CD8-positive, alpha-beta memory T cell (primary cell): ENCODE measurements at regions of chr12 and their contacts with region 1.

Region 1: DNA sequence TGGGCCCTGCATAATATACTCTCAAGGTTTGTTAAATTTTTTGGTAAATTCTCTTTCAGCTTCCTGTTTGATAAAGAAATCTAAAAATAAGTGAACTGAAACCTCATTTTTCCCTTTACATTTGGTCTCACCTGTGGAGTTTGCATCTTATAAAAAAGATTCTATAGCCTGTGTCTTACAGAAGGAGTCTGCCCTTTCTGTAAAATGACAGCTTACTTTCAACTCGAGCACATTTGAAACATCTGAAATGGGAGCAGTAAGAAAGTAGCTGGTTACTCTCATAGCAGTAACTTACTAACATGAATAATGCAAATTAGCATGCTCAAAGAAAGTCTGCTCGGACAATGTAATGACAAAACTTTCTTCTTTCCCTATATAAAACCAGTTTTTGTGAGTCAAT is 155.8 kb downstream of the NELL2 start:
- DNase-seq: no peak
- H3K4me3 ChIP-seq: no peak overlapping the region
- H3K4me3 Mint-ChIP-seq: no peak overlapping the region
- H3K27ac ChIP-seq: no peak overlapping the region
- H3K27ac Mint-ChIP-seq: peak overlapping the region in 1 of 8 donors; percentile 23
- H3K4me1 ChIP-seq: no peaks in the 10 kb centered on the region
- H3K4me1 Mint-ChIP-seq: peaks cover 27 to 72% (median 52%) of the 10 kb centered on the region in 3 donors
- H3K27me3 ChIP-seq: no peaks in the 10 kb centered on the region
- H3K27me3 Mint-ChIP-seq: peaks cover 0 to 3% of the 10 kb centered on the region in 2 donors

Region 2: GRCh38 chr12:44654646-44655639 is 65.3 kb before region 1 on chr12:
- CTCF ChIA-PET with region 1: no interaction called
- POLR2A ChIA-PET with region 1: no interaction called
- DNase-seq: no peak
- H3K4me3 ChIP-seq: no peak overlapping the region
- H3K4me3 Mint-ChIP-seq: no peak overlapping the region
- H3K27ac ChIP-seq: no peak overlapping the region
- H3K27ac Mint-ChIP-seq: peak overlapping the region in 1 of 8 donors; percentile 5
- H3K4me1 ChIP-seq: no peaks in the 10 kb centered on the region
- H3K4me1 Mint-ChIP-seq: peaks cover 6 to 20% (median 12%) of the 10 kb centered on the region in 3 donors
- H3K27me3 ChIP-seq: no peaks in the 10 kb centered on the region
- H3K27me3 Mint-ChIP-seq: peaks cover 0 to 2% of the 10 kb centered on the region in 2 donors

Region 3: GRCh38 chr12:44689587-44689986 is 30.7 kb before region 1 on chr12:
- CTCF ChIA-PET with region 1: no interaction called
- POLR2A ChIA-PET with region 1: no interaction called
- DNase-seq: no peak
- H3K4me3 ChIP-seq: no peak overlapping the region
- H3K4me3 Mint-ChIP-seq: no peak overlapping the region
- H3K27ac ChIP-seq: no peak overlapping the region
- H3K27ac Mint-ChIP-seq: peak overlapping the region in 1 of 8 donors; percentile 80
- H3K4me1 ChIP-seq: no peaks in the 10 kb centered on the region
- H3K4me1 Mint-ChIP-seq: peaks cover 3 to 9% (median 6%) of the 10 kb centered on the region in 3 donors
- H3K27me3 ChIP-seq: no peaks in the 10 kb centered on the region
- H3K27me3 Mint-ChIP-seq: no peaks in the 10 kb centered on the region

Region 4: DNA sequence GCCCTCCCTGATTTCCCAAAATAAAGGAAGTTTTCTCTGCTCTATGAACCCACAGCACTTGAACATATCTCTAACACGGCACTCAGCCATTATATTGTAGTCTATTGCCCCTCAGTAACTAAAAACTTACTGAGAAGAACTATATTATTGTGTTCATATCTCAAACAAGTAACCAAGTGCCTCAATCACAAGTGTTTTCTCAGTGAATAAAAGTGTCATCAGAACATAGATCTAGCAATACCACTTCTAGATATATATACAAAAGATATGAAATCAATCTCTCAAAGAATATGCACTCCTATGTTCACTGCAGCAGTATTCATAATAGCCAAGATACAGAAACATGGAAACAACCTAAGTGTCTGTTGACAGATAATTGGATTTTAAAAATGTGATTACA is 17.8 kb after region 1 on chr12:
- CTCF ChIA-PET with region 1: no interaction called
- POLR2A ChIA-PET with region 1: interaction called, 13 read pairs
- DNase-seq: no peak
- H3K4me3 ChIP-seq: no peak overlapping the region
- H3K4me3 Mint-ChIP-seq: no peak overlapping the region
- H3K27ac ChIP-seq: no peak overlapping the region
- H3K27ac Mint-ChIP-seq: no peak overlapping the region
- H3K4me1 ChIP-seq: no peaks in the 10 kb centered on the region
- H3K4me1 Mint-ChIP-seq: peaks cover 2 to 10% (median 4%) of the 10 kb centered on the region in 3 donors
- H3K27me3 ChIP-seq: no peaks in the 10 kb centered on the region
- H3K27me3 Mint-ChIP-seq: peaks cover 0 to 6% of the 10 kb centered on the region in 2 donors